CD4-positive, alpha-beta memory T cell (primary cell): ENCODE measurements at regions of chr20 and their contacts with region 1.

Region 1: DNA sequence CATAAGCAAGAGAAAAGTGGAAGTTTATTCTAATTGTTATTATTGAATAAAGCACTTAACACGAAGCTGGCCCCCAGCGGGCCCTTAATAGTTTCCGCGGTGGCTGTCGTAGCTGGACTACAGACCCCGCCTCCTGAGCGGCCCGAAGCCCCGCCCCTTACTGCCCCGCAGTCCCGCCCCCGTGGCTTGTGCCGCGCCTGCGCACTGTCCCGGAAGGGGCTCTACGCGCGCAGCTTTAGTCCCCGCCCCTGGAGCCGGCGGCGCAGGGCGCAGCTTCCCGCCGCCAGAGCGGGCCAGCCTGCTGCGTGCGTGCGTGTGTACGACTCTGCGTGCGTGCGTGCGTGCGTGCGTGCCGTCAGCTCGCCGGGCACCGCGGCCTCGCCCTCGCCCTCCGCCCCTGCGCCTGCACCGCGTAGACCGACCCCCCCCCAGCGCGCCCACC is at the start of gene VAPB:
- DNase-seq: peak; percentile 94 to 98 (median 97)
- H3K4me3 ChIP-seq: peak within 1 kb of the TSS; percentile 47 to 58
- H3K4me3 Mint-ChIP-seq: peak within 1 kb of the TSS; percentile 94 to 97 (median 94)
- H3K27ac ChIP-seq: peak within 1 kb of the TSS; percentile 98
- H3K27ac Mint-ChIP-seq: peak within 1 kb of the TSS; percentile 78 to 99 (median 99)
- H3K4me1 ChIP-seq: peaks cover 46% of the 10 kb centered on the region
- H3K4me1 Mint-ChIP-seq: peaks cover 29 to 43% (median 38%) of the 10 kb centered on the region in 4 donors
- H3K27me3 ChIP-seq: no peaks in the 10 kb centered on the region
- H3K27me3 Mint-ChIP-seq: peaks cover 0 to 3% of the 10 kb centered on the region in 2 donors
- total RNA-seq, gene VAPB: 37.6 to 40.1 TPM

Region 2: GRCh38 chr20:58309575-58310290 is 79.2 kb before region 1 on chr20 and contains the start of gene RAB22A:
- CTCF ChIA-PET with region 1: no interaction called
- POLR2A ChIA-PET with region 1: interaction called, 29 read pairs
- intact Hi-C with region 1: loop called (anchors 1 kb)
- DNase-seq: peak; percentile 77 to 88 (median 83)
- H3K4me3 ChIP-seq: peak within 1 kb of the TSS; percentile 62 to 72
- H3K4me3 Mint-ChIP-seq: peak within 1 kb of the TSS; percentile 88 to 98 (median 94)
- H3K27ac ChIP-seq: peak within 1 kb of the TSS; percentile 87
- H3K27ac Mint-ChIP-seq: peak within 1 kb of the TSS; percentile 95 to 99 (median 99)
- H3K4me1 ChIP-seq: peaks cover 68% of the 10 kb centered on the region
- H3K4me1 Mint-ChIP-seq: peaks cover 40 to 71% (median 56%) of the 10 kb centered on the region in 4 donors
- H3K27me3 ChIP-seq: no peaks in the 10 kb centered on the region
- H3K27me3 Mint-ChIP-seq: no peaks in the 10 kb centered on the region
- total RNA-seq, gene RAB22A: 23.6 TPM

Region 3: GRCh38 chr20:58407966-58408557 is 19.2 kb after region 1 on chr20:
- CTCF ChIA-PET with region 1: interaction called, 5 read pairs
- POLR2A ChIA-PET with region 1: interaction called, 20 read pairs
- intact Hi-C with region 1: no loop called
- DNase-seq: peak in 4 of 5 donors; percentile 22 to 44 (median 28)
- H3K4me3 ChIP-seq: no peak overlapping the region
- H3K4me3 Mint-ChIP-seq: peak overlapping the region; percentile 54 to 89 (median 72)
- H3K27ac ChIP-seq: peak overlapping the region; percentile 40
- H3K27ac Mint-ChIP-seq: peak overlapping the region; percentile 75 to 95 (median 89)
- H3K4me1 ChIP-seq: peaks cover 72% of the 10 kb centered on the region
- H3K4me1 Mint-ChIP-seq: peaks cover 8 to 41% (median 33%) of the 10 kb centered on the region in 4 donors
- H3K27me3 ChIP-seq: no peaks in the 10 kb centered on the region
- H3K27me3 Mint-ChIP-seq: no peaks in the 10 kb centered on the region